Heart right ventricle (tissue), 16 donors: ENCODE measurements at regions of chr3 and their contacts with region 1.

Region 1: GRCh38 chr3:19940638-19941037 is 6.3 kb upstream of the RAB5A start:
- DNase-seq: no peak
- ATAC-seq: no peak
- H3K4me3 ChIP-seq: no peak overlapping the region
- H3K27ac ChIP-seq: no peak overlapping the region
- H3K4me1 ChIP-seq: peaks cover 0 to 4% (median 0%) of the 10 kb centered on the region in 9 donors
- H3K27me3 ChIP-seq: peaks cover 0 to 1% (median 0%) of the 10 kb centered on the region in 7 donors
- CTCF ChIP-seq: no peak

Region 2: DNA sequence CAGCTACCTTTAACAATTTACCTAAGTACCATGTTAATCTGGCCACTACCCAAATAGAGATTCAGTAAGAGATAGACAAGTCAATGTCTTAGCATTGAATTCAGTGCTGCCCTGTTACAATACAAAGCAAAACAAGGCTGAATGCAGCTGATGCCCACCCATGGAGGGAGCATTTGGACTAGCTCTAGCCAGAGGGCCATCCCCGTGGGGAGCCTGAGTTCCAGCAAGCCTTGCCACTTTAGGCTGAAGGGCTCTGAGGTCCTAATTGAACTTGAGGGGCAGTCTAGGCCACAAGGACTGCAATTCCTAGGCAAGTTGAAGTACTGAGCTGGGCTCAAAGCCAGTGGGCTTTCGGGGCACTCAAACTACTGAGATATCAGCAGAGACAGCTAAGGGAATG is 272.5 kb before region 1 on chr3:
- intact Hi-C with region 1: no loop called
- DNase-seq: no peak
- ATAC-seq: no peak
- H3K4me3 ChIP-seq: no peak overlapping the region
- H3K27ac ChIP-seq: no peak overlapping the region
- H3K4me1 ChIP-seq: no peaks in the 10 kb centered on the region
- H3K27me3 ChIP-seq: no peaks in the 10 kb centered on the region
- CTCF ChIP-seq: no peak

Region 3: DNA sequence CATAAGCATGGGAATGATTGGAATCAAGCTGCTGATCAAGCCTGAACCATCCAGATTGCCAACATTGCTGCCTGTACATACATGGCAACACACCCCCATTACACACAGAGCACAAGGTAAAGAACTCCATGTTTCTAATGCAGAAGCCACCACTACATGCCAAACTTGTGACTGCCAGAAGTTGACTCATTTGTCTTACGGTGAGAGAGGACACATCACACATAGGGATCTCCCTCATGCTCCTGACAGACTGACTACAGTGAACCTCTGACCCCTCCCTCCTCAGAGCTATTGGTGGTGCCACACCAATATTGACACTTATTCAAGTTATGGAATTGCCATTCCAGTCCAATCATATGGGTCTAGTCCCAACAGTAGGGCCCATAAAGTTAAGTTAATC is 48.9 kb before region 1 on chr3:
- intact Hi-C with region 1: loop called in 2 of 10 experiments (anchors 5 kb)
- DNase-seq: no peak
- ATAC-seq: no peak
- H3K4me3 ChIP-seq: no peak overlapping the region
- H3K27ac ChIP-seq: no peak overlapping the region
- H3K4me1 ChIP-seq: peaks cover 0 to 21% (median 13%) of the 10 kb centered on the region in 9 donors
- H3K27me3 ChIP-seq: no peaks in the 10 kb centered on the region
- CTCF ChIP-seq: no peak